ENCODE measurements at regions of chr2 and their contacts with region 1.

Region 1: GRCh38 chr2:112048887-112049286 is 6.2 kb upstream of the TMEM87B start:
- DNase-seq: peak in 1 of 5 donors; percentile 45
- H3K4me3 ChIP-seq: no peak overlapping the region
- H3K27ac ChIP-seq: no peak overlapping the region
- H3K4me1 ChIP-seq: peaks cover 2% of the 10 kb centered on the region
- H3K27me3 ChIP-seq: no peaks in the 10 kb centered on the region
- CTCF ChIP-seq: peak; percentile 78 to 84 (median 80)
- EP300 ChIP-seq: no peak
- POLR2A ChIP-seq: no peak

Region 2: GRCh38 chr2:111887819-111888223 is 161.1 kb before region 1 on chr2:
- intact Hi-C with region 1: loop called in 1 of 4 experiments (anchors 2 kb)
- DNase-seq: peak; percentile 57 to 79 (median 75)
- H3K4me3 ChIP-seq: no peak overlapping the region
- H3K27ac ChIP-seq: no peak overlapping the region
- H3K4me1 ChIP-seq: no peaks in the 10 kb centered on the region
- H3K27me3 ChIP-seq: no peaks in the 10 kb centered on the region
- CTCF ChIP-seq: peak; percentile 28 to 65 (median 65)
- EP300 ChIP-seq: no peak
- POLR2A ChIP-seq: no peak

Region 3: GRCh38 chr2:112075490-112076260 is 26.8 kb after region 1 on chr2:
- intact Hi-C with region 1: no loop called
- DNase-seq: no peak
- H3K4me3 ChIP-seq: no peak overlapping the region
- H3K27ac ChIP-seq: no peak overlapping the region
- H3K4me1 ChIP-seq: no peaks in the 10 kb centered on the region
- H3K27me3 ChIP-seq: no peaks in the 10 kb centered on the region
- CTCF ChIP-seq: no peak
- EP300 ChIP-seq: no peak
- POLR2A ChIP-seq: no peak

Region 4: GRCh38 chr2:113021312-113021711 is 972.4 kb after region 1 on chr2:
- intact Hi-C with region 1: no loop called
- DNase-seq: no peak
- H3K4me3 ChIP-seq: no peak overlapping the region
- H3K27ac ChIP-seq: no peak overlapping the region
- H3K4me1 ChIP-seq: no peaks in the 10 kb centered on the region
- H3K27me3 ChIP-seq: no peaks in the 10 kb centered on the region
- CTCF ChIP-seq: no peak
- EP300 ChIP-seq: no peak
- POLR2A ChIP-seq: no peak

Measured in ovary (tissue), 10 donors.